ENCODE measurements at regions of chr5 and their contacts with region 1.

Region 1: GRCh38 chr5:159106569-159107282 is 7.0 kb upstream of the EBF1 start:
- DNase-seq: peak; percentile 64
- H3K4me3 ChIP-seq: no peak overlapping the region
- H3K27ac ChIP-seq: no peak overlapping the region
- H3K4me1 ChIP-seq: no peaks in the 10 kb centered on the region
- H3K27me3 ChIP-seq: peaks cover 46 to 55% of the 10 kb centered on the region in 2 experiments
- CTCF ChIP-seq: peak; percentile 82 to 90
- POLR2A ChIP-seq: no peak

Region 2: GRCh38 chr5:157820593-157821252 is 1286.0 kb before region 1 on chr5:
- CTCF ChIA-PET with region 1: interaction called, 9 read pairs
- POLR2A ChIA-PET with region 1: no interaction called
- dilution Hi-C with region 1: no loop called
- intact Hi-C with region 1: loop called (anchors 2 kb)
- DNase-seq: peak; percentile 80
- H3K4me3 ChIP-seq: no peak overlapping the region
- H3K27ac ChIP-seq: no peak overlapping the region
- H3K4me1 ChIP-seq: peaks cover 14% of the 10 kb centered on the region
- H3K27me3 ChIP-seq: no peaks in the 10 kb centered on the region
- CTCF ChIP-seq: peak; percentile 36 to 39
- POLR2A ChIP-seq: no peak

Region 3: GRCh38 chr5:157948738-157949410 is 1157.9 kb before region 1 on chr5:
- CTCF ChIA-PET with region 1: interaction called, 20 read pairs
- POLR2A ChIA-PET with region 1: no interaction called
- dilution Hi-C with region 1: no loop called
- intact Hi-C with region 1: loop called (anchors 5 kb)
- DNase-seq: peak; percentile 90
- H3K4me3 ChIP-seq: no peak overlapping the region
- H3K27ac ChIP-seq: no peak overlapping the region
- H3K4me1 ChIP-seq: no peaks in the 10 kb centered on the region
- H3K27me3 ChIP-seq: peaks cover 0 to 4% of the 10 kb centered on the region in 2 experiments
- CTCF ChIP-seq: peak; percentile 83 to 84
- POLR2A ChIP-seq: no peak

Region 4: GRCh38 chr5:158013939-158014338 is 1092.8 kb before region 1 on chr5:
- CTCF ChIA-PET with region 1: interaction called, 47 read pairs
- POLR2A ChIA-PET with region 1: no interaction called
- dilution Hi-C with region 1: no loop called
- intact Hi-C with region 1: loop called (anchors 2 kb)
- DNase-seq: peak; percentile 29
- H3K4me3 ChIP-seq: no peak overlapping the region
- H3K27ac ChIP-seq: no peak overlapping the region
- H3K4me1 ChIP-seq: no peaks in the 10 kb centered on the region
- H3K27me3 ChIP-seq: no peaks in the 10 kb centered on the region
- CTCF ChIP-seq: peak; percentile 17 to 26
- POLR2A ChIP-seq: no peak

Region 5: DNA sequence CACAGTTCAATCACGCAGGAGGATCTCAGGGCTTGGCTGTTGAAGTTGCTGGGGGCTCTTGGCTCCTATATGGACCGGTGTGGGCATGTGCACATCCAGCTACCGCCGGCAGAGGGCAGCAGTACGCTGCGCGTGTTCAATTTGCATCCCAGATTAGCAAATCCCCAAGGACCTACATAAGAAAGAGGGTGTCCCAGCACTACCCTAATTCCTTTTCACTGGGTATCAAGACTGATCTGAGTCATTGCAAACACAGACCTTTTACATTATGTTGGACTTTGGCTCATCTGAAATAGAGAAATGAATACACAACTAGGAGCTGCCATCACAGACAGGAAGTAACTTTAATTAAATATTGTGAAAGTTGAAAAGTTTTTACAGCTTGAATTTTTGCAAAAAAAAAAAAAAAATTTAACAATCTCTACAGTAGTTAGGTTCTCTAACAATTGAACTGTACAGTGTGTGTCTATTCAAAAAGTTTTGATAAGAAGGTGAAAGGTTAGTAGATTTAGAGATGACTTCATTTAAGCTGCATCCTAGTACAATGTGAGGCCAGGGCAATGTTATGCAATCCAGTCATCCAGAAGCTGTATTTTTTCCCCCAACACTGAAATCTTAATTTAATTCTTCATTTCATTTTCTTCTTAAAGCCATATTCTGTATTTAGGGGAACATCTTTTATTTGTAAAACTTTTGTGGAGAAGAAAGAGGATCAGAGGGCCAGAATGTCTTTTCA is 411.0 kb before region 1 on chr5:
- CTCF ChIA-PET with region 1: interaction called, 455 read pairs
- POLR2A ChIA-PET with region 1: interaction called, 7 read pairs
- dilution Hi-C with region 1: no loop called
- intact Hi-C with region 1: loop called (anchors 1 kb)
- DNase-seq: peak; percentile 75
- H3K4me3 ChIP-seq: no peak overlapping the region
- H3K27ac ChIP-seq: no peak overlapping the region
- H3K4me1 ChIP-seq: no peaks in the 10 kb centered on the region
- H3K27me3 ChIP-seq: no peaks in the 10 kb centered on the region
- CTCF ChIP-seq: peak; percentile 78 to 92
- POLR2A ChIP-seq: no peak

Region 6: DNA sequence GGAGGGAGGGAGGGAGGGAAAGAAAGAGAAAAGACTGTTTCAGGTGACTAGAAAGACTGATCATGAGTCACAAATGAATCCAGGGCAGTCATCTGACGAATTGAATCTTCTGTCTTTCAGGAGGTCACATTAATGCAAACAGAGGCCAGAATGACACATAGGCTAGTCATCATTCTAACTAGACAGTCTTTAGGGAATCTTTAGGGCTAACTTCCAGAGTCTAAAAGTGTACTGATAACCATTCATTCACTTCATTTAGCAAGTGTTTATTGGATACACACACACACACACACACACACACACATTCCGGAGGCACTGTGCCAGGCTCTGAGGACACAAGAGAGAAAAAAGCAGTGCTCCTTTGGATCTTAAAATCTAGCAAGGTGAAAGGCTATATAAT is 163.7 kb before region 1 on chr5:
- CTCF ChIA-PET with region 1: no interaction called
- POLR2A ChIA-PET with region 1: no interaction called
- dilution Hi-C with region 1: no loop called
- intact Hi-C with region 1: loop called (anchors 5 kb)
- DNase-seq: no peak
- H3K4me3 ChIP-seq: no peak overlapping the region
- H3K27ac ChIP-seq: no peak overlapping the region
- H3K4me1 ChIP-seq: no peaks in the 10 kb centered on the region
- H3K27me3 ChIP-seq: no peaks in the 10 kb centered on the region
- CTCF ChIP-seq: no peak
- POLR2A ChIP-seq: no peak

Region 7: DNA sequence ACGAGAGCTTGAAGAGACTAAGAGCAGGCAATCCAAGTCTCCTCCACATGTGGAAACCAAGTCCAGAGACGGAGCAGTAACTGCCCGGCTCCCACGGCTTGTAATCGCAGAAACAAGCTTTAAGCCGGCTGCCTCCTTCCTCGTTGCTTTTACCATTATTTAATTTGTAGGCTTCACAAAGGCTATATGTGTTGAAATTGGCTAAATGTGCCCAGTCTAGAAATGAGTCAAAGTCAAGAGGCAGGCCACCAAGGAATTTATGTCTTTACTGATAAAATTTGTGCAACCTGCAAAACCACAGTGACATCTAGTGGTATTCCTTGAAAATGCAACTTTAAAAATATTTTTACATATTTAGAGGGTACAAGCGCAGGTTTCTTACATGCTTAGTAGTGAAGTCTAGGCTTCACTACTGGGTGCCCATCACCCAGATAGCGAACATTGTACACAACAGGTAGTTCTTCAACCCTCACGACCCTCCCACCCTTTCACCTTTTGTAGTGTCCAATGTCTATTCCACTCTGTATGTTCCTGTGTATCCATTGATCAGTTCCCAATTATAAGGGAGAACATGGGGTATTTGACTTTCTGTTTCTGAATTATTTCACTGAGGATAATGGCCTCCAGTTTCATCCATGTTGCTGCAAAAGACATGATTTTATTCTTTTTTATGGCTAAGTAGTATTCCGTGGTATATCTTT is 26.5 kb after region 1 on chr5:
- CTCF ChIA-PET with region 1: interaction called, 25 read pairs
- POLR2A ChIA-PET with region 1: no interaction called
- dilution Hi-C with region 1: no loop called
- intact Hi-C with region 1: no loop called
- DNase-seq: peak; percentile 62
- H3K4me3 ChIP-seq: no peak overlapping the region
- H3K27ac ChIP-seq: no peak overlapping the region
- H3K4me1 ChIP-seq: no peaks in the 10 kb centered on the region
- H3K27me3 ChIP-seq: peaks cover 2 to 9% of the 10 kb centered on the region in 2 experiments
- CTCF ChIP-seq: peak; percentile 45 to 46
- POLR2A ChIP-seq: no peak

Region 8: DNA sequence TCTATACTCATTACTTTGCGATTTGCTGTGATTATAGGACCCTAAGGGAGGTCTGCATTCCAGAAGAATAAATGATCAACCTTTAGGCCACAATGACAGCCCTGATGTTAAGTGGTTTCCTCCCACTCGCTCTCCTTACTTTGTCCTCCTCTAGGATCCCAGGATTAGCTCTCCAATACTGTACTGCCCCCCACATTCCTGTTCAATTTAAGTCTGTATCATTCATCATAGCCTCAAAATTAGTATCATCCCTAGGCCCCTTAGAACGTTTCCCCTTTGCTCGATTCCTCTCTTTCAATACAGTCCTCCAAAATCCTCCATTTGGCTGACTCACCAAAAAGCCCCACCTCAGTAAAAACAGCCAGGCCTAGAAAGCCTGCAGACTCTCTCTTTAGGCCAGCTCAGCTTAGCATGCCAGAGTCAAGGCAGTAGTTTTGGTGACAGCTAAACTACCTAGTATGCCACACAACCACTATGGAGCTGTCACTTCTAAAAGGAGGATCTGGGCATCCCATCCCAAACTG is 78.2 kb after region 1 on chr5:
- CTCF ChIA-PET with region 1: no interaction called
- POLR2A ChIA-PET with region 1: no interaction called
- dilution Hi-C with region 1: no loop called
- intact Hi-C with region 1: no loop called
- DNase-seq: peak; percentile 19
- H3K4me3 ChIP-seq: no peak overlapping the region
- H3K27ac ChIP-seq: no peak overlapping the region
- H3K4me1 ChIP-seq: peaks cover 12% of the 10 kb centered on the region
- H3K27me3 ChIP-seq: no peaks in the 10 kb centered on the region
- CTCF ChIP-seq: no peak
- POLR2A ChIP-seq: no peak